Uterus (tissue), 4 donors: ENCODE measurements at regions of chr11 and their contacts with region 1.

Region 1: GRCh38 chr11:63945477-63946163 is 6.8 kb downstream of the NAA40 start:
- DNase-seq: peak; percentile 76 to 78
- H3K4me3 ChIP-seq: no peak overlapping the region
- H3K27ac ChIP-seq: peak overlapping the region; percentile 11 to 48
- H3K4me1 ChIP-seq: peaks cover 0 to 5% of the 10 kb centered on the region in 2 donors
- H3K27me3 ChIP-seq: no peaks in the 10 kb centered on the region
- CTCF ChIP-seq: peak; percentile 77 to 92 (median 84)
- POLR2A ChIP-seq: no peak

Region 2: GRCh38 chr11:63768237-63769043 is 177.2 kb before region 1 on chr11 and contains the start of gene ZFTA:
- intact Hi-C with region 1: loop called (anchors 10 kb)
- DNase-seq: peak; percentile 72 to 75
- H3K4me3 ChIP-seq: peak within 1 kb of the TSS; percentile 80 to 97
- H3K27ac ChIP-seq: peak within 1 kb of the TSS; percentile 96
- H3K4me1 ChIP-seq: peaks cover 0 to 11% of the 10 kb centered on the region in 2 donors
- H3K27me3 ChIP-seq: no peaks in the 10 kb centered on the region
- CTCF ChIP-seq: peak; percentile 17 to 94 (median 91)
- POLR2A ChIP-seq: peak in 1 of 2 donors; percentile 5
- total RNA-seq, gene ZFTA: 19.7 to 61.5 (median 48.4) TPM

Region 3: DNA sequence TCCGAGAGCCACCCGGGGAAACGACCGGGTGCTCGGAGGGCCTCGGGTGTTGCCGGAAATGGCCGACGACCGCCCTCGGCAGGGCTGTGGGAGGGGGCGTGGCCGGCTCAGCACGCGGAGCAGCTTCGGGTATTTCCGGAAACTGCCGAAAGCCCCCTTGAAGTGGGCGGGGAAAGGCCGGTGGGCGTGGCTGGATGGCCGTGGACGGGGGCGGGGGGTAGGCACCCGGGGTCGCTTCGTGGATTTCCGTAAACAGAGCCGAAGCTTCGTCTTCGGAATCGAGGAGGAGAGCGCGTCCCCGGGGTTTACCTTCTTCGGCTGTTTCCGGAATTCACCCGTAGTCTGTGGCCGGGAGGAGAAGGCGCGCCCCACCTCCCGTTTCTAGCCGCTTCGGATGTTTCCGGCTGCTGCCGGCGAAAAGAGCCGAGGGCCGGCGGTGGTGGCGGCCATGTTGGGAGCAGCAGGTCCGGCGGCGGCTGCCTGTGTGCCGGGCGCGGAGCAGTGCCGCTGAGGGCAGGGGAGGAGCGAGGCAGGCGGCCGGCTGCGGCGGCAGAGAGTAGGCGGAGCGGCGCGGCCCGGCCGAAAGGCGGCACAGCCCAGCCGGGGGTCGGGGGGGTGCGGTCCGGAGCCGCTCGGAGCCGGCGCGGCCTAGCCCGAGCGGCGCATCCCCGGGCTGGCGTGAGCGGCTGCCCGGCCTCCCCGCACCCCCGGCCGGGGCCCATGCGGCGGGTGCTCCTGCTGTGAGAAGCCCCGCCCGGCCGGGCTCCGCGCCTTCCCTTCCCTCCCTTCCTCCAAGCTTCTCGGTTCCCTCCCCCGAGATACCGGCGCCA is 106.7 kb before region 1 on chr11 and contains the start of gene MARK2:
- intact Hi-C with region 1: loop called (anchors 2 kb)
- DNase-seq: peak; percentile 98 to 99
- H3K4me3 ChIP-seq: peak within 1 kb of the TSS; percentile 79 to 97
- H3K27ac ChIP-seq: peak within 1 kb of the TSS; percentile 90 to 94
- H3K4me1 ChIP-seq: peaks cover 0 to 8% of the 10 kb centered on the region in 2 donors
- H3K27me3 ChIP-seq: no peaks in the 10 kb centered on the region
- CTCF ChIP-seq: peak in 2 of 4 experiments; percentile 19 to 39
- POLR2A ChIP-seq: peak; percentile 65 to 82
- total RNA-seq, gene MARK2: 6.9 to 36.5 (median 17.7) TPM

Region 4: DNA sequence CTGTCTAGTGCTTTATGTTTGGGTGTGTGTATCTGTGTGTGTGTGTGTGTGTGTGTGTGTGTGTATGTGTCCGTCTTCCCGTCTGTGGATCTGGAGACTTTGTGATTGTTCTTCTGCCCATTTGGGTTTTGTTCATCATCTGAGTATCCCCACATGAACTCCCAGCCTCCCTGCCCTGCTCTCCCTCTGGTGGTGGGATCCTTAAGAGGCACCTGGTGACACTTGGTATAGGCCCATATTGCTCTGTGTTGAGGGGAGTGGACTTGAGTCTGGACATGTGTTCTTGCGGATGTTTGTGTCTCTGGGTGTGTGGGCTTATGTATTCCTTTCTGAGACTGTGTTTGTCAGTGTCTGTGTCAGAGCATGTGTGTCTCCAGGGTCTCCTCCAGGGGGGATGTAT is 44.0 kb before region 1 on chr11:
- intact Hi-C with region 1: no loop called
- DNase-seq: no peak
- H3K4me3 ChIP-seq: no peak overlapping the region
- H3K27ac ChIP-seq: no peak overlapping the region
- H3K4me1 ChIP-seq: no peaks in the 10 kb centered on the region
- H3K27me3 ChIP-seq: no peaks in the 10 kb centered on the region
- CTCF ChIP-seq: no peak
- POLR2A ChIP-seq: no peak

Region 5: GRCh38 chr11:64000026-64000739 is 54.6 kb after region 1 on chr11:
- intact Hi-C with region 1: no loop called
- DNase-seq: peak; percentile 55 to 74
- H3K4me3 ChIP-seq: peak overlapping the region; percentile 1 to 34
- H3K27ac ChIP-seq: peak overlapping the region in 1 of 2 donors; percentile 19
- H3K4me1 ChIP-seq: peaks cover 0 to 19% of the 10 kb centered on the region in 2 donors
- H3K27me3 ChIP-seq: no peaks in the 10 kb centered on the region
- CTCF ChIP-seq: peak; percentile 71 to 98 (median 90)
- POLR2A ChIP-seq: peak in 1 of 2 donors; percentile 24